ENCODE measurements at regions of chr7 and their contacts with region 1.

Region 1: DNA sequence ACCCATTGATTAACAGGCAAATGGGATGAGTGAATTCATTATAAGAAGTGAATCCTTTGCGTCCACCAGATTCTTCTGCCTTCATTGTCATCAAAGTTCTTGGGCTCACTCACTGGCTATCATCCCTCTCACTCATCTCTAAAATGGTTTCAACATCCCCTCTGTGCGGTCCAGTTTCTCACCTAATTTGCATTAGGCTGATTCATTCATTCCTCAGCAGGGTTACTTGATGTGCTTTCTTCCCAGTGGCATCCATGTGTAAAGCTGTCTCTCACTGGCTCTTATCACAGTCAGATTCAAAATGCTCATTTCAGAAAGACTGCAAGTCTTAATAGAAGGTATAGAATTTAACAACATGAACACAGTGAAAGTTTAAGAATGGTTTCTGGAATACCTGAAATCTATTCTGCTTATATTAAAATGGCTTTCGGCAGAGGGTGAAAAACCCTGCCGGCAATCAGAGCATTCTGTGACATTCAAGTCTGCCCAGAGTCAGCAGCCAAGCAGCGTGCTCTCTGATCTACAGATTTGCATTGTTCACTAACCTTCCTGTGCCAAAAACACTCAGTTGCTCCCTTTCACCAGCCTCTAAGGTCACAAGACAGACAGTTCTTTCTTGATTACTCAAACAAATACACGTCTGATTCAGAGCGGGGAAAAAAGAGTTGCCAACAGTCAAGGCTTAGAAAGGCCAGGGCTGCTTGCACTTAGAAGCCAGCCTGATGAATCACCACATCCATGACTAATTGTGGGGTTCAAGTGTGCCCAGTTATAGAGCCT is 106.7 kb downstream of the TES start:
- DNase-seq: peak; percentile 99
- H3K4me3 Mint-ChIP-seq: peak overlapping the region; percentile 42
- H3K27ac Mint-ChIP-seq: peak overlapping the region; percentile 88
- H3K4me1 Mint-ChIP-seq: peaks cover 17% of the 10 kb centered on the region
- H3K27me3 Mint-ChIP-seq: no peaks in the 10 kb centered on the region
- CTCF ChIP-seq: no peak

Region 2: DNA sequence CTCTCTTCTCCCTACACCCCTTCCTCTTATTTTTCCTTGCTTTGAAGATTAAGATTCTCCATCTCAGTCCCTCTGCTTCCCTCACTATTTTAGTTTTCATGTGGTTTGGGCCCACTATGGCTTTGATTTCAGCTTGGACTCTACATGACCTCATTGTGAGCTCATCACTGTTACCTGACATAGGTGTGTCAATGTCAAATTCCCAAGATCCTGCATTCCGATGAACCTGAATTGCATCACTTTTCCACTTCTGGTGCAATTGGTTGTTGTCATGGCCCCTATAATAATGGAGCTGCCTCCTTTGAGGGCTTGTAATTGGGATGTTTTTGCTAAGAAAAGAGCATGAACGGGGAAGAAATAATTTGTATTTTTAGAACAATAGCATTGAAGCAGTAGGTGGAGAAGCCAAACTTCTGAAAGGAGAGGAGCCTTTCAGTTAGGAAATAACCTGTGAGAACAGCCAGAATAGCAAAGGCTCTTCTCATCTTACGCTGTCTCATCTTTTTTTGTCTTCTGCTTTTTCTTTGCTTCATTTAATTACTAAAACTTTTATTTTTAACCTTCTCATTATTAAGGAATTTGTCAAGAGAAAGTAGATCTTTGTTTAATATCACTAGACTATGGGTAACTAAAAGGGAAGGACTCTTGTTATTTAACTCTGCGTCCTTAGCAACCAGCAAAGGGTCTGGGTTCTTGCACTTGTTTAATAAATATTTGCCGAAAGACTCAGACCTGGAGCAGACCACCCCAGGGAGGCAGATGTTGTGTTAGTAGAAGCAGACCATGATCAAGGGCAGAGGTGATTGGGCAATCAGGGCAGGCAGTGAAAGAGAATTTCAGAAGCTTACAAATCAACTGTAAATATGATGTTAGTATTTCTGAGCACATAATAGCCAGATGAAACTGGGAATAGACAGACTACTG is 11.3 kb before region 1 on chr7:
- CTCF ChIA-PET with region 1: no interaction called
- POLR2A ChIA-PET with region 1: interaction called, 21 read pairs
- intact Hi-C with region 1: no loop called
- DNase-seq: peak; percentile 16
- H3K4me3 Mint-ChIP-seq: no peak overlapping the region
- H3K27ac Mint-ChIP-seq: no peak overlapping the region
- H3K4me1 Mint-ChIP-seq: peaks cover 11% of the 10 kb centered on the region
- H3K27me3 Mint-ChIP-seq: no peaks in the 10 kb centered on the region
- CTCF ChIP-seq: no peak

Region 3: DNA sequence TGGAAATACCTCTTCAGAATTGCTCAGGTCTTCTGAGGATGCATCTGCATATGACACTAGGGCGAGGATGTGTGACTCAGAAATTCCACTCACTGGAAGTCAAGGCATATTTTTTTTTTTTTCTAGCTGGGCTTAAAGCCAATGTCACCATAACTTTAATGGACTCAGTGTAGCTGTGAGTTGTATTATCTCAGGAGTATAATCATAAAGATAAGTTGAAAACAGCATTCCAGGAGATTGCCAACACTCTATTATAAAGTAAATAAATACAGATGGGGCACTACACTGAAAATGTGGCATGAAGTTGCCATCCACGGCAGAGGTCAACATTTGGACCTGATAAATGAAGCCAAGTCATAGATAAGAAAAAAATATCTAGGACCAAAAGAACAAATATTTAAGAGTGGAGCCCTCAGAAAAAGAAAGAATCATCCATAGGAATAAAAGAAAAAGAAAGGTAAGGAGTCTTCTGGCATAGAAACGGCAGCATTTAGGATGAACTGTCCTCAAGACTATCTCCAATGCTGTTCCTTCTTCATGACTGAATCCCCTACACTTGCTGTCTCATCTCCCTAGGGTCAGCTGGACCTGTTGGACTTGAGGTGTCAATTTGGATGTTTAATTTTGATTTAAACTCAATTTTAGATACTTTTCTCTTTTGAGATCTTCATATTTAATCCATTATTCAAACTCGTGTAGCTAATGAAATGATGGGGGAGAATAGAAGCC is 109.6 kb after region 1 on chr7:
- CTCF ChIA-PET with region 1: no interaction called
- POLR2A ChIA-PET with region 1: interaction called, 5 read pairs
- intact Hi-C with region 1: loop called (anchors 10 kb)
- DNase-seq: peak; percentile 80
- H3K4me3 Mint-ChIP-seq: no peak overlapping the region
- H3K27ac Mint-ChIP-seq: peak overlapping the region; percentile 78
- H3K4me1 Mint-ChIP-seq: peaks cover 41% of the 10 kb centered on the region
- H3K27me3 Mint-ChIP-seq: no peaks in the 10 kb centered on the region
- CTCF ChIP-seq: no peak

Region 4: GRCh38 chr7:116443101-116443523 is 126.1 kb after region 1 on chr7:
- CTCF ChIA-PET with region 1: interaction called, 4 read pairs
- POLR2A ChIA-PET with region 1: interaction called, 6 read pairs
- intact Hi-C with region 1: loop called (anchors 1 kb)
- DNase-seq: peak; percentile 93
- H3K4me3 Mint-ChIP-seq: peak overlapping the region; percentile 6
- H3K27ac Mint-ChIP-seq: peak overlapping the region; percentile 93
- H3K4me1 Mint-ChIP-seq: peaks cover 38% of the 10 kb centered on the region
- H3K27me3 Mint-ChIP-seq: no peaks in the 10 kb centered on the region
- CTCF ChIP-seq: no peak

Region 5: DNA sequence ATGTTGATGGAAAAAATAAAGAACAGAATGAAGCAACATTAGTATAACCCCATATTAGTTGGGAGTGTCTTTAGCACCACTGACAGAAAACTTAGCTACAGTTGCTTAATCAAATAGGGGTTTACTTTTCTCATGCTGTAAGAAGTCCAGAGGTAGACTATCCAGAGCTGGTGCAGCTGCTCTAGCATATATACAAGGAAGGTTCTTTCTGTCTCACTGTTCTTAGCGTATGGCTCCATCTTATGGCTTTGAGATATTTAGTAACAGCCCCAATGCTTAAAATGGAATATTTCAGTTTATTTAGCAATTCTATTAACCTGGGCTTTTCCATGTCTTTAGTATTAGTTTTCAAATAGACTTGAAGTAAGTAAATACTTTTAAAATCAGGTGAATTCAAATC is 1021.0 kb after region 1 on chr7:
- CTCF ChIA-PET with region 1: no interaction called
- POLR2A ChIA-PET with region 1: no interaction called
- intact Hi-C with region 1: no loop called
- DNase-seq: peak; percentile 6
- H3K4me3 Mint-ChIP-seq: no peak overlapping the region
- H3K27ac Mint-ChIP-seq: no peak overlapping the region
- H3K4me1 Mint-ChIP-seq: no peaks in the 10 kb centered on the region
- H3K27me3 Mint-ChIP-seq: peaks cover 80% of the 10 kb centered on the region
- CTCF ChIP-seq: no peak

Measured in MCF 10A (cell line).